ENCODE measurements at regions of chr1 and their contacts with region 1.

Region 1: DNA sequence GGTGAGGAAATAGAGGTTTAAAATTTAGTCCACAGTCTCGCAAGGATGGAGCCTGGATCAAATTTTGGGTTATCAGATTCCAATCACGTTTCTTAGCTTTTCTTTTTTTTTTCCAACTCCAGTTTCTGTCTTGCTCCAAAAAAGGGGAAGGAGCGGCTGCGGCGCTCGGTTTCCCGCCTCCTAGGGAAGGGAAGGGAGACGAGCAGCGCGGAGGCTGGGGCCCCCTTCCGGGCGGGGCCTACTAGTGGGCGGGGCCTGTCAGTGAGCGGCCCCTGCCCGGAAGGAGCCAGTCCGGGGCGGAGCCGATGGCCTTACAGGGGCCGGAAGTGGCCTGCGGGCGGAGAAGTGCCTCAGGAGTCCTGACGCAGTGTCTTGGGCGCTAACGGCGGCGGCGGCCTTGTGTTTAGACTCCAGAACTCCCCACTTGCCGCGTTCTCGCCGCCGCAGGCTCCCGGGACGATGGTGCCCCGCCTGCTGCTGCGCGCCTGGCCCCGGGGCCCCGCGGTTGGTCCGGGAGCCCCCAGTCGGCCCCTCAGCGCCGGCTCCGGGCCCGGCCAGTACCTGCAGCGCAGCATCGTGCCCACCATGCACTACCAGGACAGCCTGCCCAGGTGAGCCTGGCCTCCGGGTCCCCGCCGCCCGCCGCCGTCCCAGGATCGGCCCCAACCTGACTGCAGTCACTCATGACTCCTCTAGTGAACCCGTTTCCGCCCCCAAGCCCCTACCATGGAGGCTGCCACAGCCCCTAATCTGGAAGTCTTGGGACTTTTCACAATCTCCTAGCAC is at the start of gene CPT2:
- DNase-seq: peak; percentile 95 to 98 (median 97)
- ATAC-seq: peak; percentile 95 to 99 (median 98)
- H3K4me3 ChIP-seq: peak within 1 kb of the TSS; percentile 77 to 100 (median 88)
- H3K27ac ChIP-seq: peak within 1 kb of the TSS; percentile 94 to 100 (median 98)
- H3K4me1 ChIP-seq: peaks cover 3 to 40% (median 30%) of the 10 kb centered on the region in 12 donors
- H3K27me3 ChIP-seq: no peaks in the 10 kb centered on the region
- CTCF ChIP-seq: peak in 6 of 12 donors; percentile 6 to 47 (median 20)
- POLR2A ChIP-seq: peak; percentile 91 to 96
- total RNA-seq, gene CPT2: 24.2 to 62.3 (median 35.8) TPM

Region 2: DNA sequence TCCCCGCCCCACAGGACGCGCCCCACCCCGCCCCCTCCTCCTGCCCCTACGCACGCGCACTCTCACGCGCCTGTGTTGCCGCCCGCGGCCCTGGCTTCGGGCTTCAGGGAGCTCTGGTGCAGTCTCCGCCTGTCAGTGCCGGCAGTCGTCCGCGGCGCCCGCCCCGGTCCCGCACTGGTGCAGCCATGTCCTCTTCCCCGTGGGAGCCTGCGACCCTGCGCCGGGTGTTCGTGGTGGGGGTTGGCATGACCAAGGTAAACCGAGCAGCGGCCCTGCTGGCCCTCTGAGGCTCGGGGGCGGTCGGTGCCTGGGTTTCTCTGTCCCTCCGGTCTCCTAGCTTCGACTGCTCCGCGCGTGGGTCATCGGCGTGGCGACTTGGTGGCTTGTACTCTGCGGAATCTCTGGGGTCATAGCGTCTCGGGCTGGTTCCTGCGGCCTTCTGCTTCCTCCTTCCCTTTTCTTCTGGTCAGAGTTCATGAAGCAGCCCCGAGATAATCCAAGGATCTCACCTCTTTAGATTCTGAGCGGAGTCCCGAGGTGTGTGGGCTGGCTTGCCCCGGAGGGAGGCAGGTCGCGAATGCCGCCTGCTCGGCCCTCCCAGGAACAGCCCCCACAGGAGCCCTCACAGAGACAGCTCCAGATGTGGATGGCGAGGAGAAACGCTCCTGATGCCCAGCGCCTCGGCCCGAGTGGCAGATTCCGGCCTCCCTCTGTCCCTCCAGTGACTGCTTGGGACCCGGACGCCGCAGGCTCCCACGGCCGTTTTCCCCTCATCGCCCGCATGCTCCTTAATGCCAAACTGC is 269.3 kb before region 1 on chr1 and contains the start of gene SCP2:
- intact Hi-C with region 1: loop called in 1 of 10 experiments (anchors 5 kb)
- DNase-seq: peak; percentile 86 to 94 (median 88)
- ATAC-seq: peak; percentile 89 to 97 (median 96)
- H3K4me3 ChIP-seq: peak within 1 kb of the TSS; percentile 43 to 90 (median 80)
- H3K27ac ChIP-seq: peak within 1 kb of the TSS; percentile 57 to 93 (median 82)
- H3K4me1 ChIP-seq: peaks cover 0 to 33% (median 16%) of the 10 kb centered on the region in 12 donors
- H3K27me3 ChIP-seq: no peaks in the 10 kb centered on the region
- CTCF ChIP-seq: no peak
- POLR2A ChIP-seq: peak in 1 of 2 donors; percentile 64
- total RNA-seq, gene SCP2: 83.4 to 143 (median 132) TPM

Region 3: GRCh38 chr1:53220171-53220961 is 23.7 kb after region 1 on chr1 and contains the start of gene CZIB:
- intact Hi-C with region 1: loop called in 2 of 10 experiments (anchors 1 to 2 kb)
- DNase-seq: peak; percentile 95 to 98 (median 97)
- ATAC-seq: peak; percentile 94 to 98 (median 98)
- H3K4me3 ChIP-seq: peak within 1 kb of the TSS; percentile 47 to 99 (median 86)
- H3K27ac ChIP-seq: peak within 1 kb of the TSS; percentile 89 to 99 (median 95)
- H3K4me1 ChIP-seq: peaks cover 0 to 18% (median 13%) of the 10 kb centered on the region in 12 donors
- H3K27me3 ChIP-seq: no peaks in the 10 kb centered on the region
- CTCF ChIP-seq: no peak
- POLR2A ChIP-seq: peak in 1 of 2 donors; percentile 92
- total RNA-seq, gene CZIB: 39.4 to 52.1 (median 46.1) TPM

Region 4: GRCh38 chr1:53238197-53239155 is 41.8 kb after region 1 on chr1 and contains the start of gene MAGOH:
- intact Hi-C with region 1: loop called in 1 of 10 experiments (anchors 1 kb)
- DNase-seq: peak; percentile 93 to 96 (median 95)
- ATAC-seq: peak; percentile 91 to 99 (median 98)
- H3K4me3 ChIP-seq: peak within 1 kb of the TSS; percentile 77 to 100 (median 97)
- H3K27ac ChIP-seq: peak within 1 kb of the TSS in 11 of 12 donors; percentile 41 to 83 (median 71)
- H3K4me1 ChIP-seq: peaks cover 0 to 29% (median 23%) of the 10 kb centered on the region in 12 donors
- H3K27me3 ChIP-seq: no peaks in the 10 kb centered on the region
- CTCF ChIP-seq: no peak
- POLR2A ChIP-seq: peak in 1 of 2 donors; percentile 73
- total RNA-seq, gene MAGOH: 18.8 to 42.4 (median 21.6) TPM

Measured in heart left ventricle (tissue), 16 donors.